Heart left ventricle (tissue), 16 donors: ENCODE measurements at regions of chr9 and their contacts with region 1.

Region 1: GRCh38 chr9:137046098-137046787 is at the start of gene NPDC1:
- DNase-seq: peak; percentile 82 to 90 (median 83)
- ATAC-seq: peak; percentile 45 to 71 (median 62)
- H3K4me3 ChIP-seq: peak within 1 kb of the TSS; percentile 62 to 92 (median 72)
- H3K27ac ChIP-seq: peak within 1 kb of the TSS; percentile 80 to 96 (median 88)
- H3K4me1 ChIP-seq: peaks cover 0 to 53% (median 35%) of the 10 kb centered on the region in 12 donors
- H3K27me3 ChIP-seq: peaks cover 0 to 56% (median 26%) of the 10 kb centered on the region in 9 donors
- CTCF ChIP-seq: peak; percentile 83 to 95 (median 88)
- POLR2A ChIP-seq: peak in 1 of 2 donors; percentile 36
- total RNA-seq, gene NPDC1: 45.1 to 114 (median 55.1) TPM

Region 2: DNA sequence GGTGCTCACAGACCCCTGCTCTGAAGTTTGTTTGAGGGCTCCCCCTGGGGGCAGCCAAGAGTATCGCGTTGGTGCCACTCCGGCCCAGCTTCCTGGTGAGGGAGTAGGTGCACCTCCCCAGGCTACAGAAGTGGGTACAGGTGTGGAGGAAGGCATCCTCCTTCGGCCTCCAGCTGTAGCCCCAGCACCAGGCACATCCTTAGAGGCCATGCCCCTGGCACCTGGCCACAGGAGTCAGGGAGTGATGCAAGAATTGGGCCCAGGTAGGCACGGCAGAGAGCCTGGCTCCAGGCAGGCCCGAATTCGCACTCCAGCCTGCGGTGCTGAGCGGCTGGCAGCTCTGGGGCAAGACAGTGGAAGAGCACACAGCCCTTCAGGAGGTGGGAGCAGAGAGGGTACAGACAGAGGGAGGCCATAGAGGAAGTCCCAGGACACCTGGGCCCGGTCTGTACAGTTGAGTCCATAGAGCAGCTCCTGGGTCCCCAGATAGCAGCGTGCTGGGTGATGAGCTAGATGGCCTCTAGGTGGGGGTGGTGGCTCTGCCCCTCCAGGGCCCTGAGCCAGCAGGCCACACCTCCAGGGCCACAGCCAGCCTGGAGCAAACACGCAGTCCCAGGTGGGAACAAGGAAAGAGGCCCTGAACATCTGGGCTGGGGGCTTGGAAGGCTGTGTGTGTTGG is 21.8 kb after region 1 on chr9:
- intact Hi-C with region 1: loop called in 9 of 10 experiments (anchors 1 to 2 kb)
- DNase-seq: peak; percentile 72 to 89 (median 82)
- ATAC-seq: peak in 3 of 4 donors; percentile 40 to 47 (median 44)
- H3K4me3 ChIP-seq: no peak overlapping the region
- H3K27ac ChIP-seq: no peak overlapping the region
- H3K4me1 ChIP-seq: peaks cover 0 to 38% (median 14%) of the 10 kb centered on the region in 12 donors
- H3K27me3 ChIP-seq: peaks cover 0 to 14% (median 5%) of the 10 kb centered on the region in 9 donors
- CTCF ChIP-seq: peak; percentile 70 to 85 (median 78)
- POLR2A ChIP-seq: no peak